Caco-2 (cell line): ENCODE measurements at regions of chr6 and their contacts with region 1.

Region 1: DNA sequence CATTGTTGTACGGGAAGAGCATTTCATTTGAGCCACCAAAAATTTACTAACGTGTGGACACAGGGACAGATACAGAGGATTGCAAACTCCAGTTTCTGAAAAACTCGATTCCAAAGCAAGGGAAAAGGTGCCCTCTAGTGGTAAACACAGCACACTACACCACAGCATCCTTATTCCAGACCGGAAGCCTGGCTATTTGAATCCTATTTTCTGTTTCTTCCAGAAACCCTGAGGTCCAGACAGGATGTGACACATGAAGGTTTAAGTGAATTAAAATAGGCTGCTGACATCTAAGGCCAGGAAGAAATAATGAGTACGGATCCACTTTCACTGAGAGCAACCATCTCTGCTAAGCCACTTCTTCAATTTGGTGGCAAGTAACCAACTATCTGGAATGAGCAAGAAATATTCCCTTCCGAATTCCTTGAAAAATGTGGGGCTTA is 31.8 kb upstream of the GMPR start:
- DNase-seq: peak; percentile 56 to 72
- H3K4me3 ChIP-seq: no peak overlapping the region
- H3K4me3 Mint-ChIP-seq: no peak overlapping the region
- H3K27ac Mint-ChIP-seq: peak overlapping the region; percentile 39
- H3K4me1 ChIP-seq: peaks cover 21% of the 10 kb centered on the region
- H3K4me1 Mint-ChIP-seq: peaks cover 16% of the 10 kb centered on the region
- H3K27me3 ChIP-seq: no peaks in the 10 kb centered on the region
- H3K27me3 Mint-ChIP-seq: peaks cover 6% of the 10 kb centered on the region
- CTCF ChIP-seq: peak; percentile 82 to 93

Region 2: GRCh38 chr6:15691250-15691869 is 515.3 kb before region 1 on chr6:
- CTCF ChIA-PET with region 1: interaction called, 20 read pairs
- POLR2A ChIA-PET with region 1: no interaction called
- intact Hi-C with region 1: loop called (anchors 1 kb)
- DNase-seq: peak; percentile 81
- H3K4me3 ChIP-seq: no peak overlapping the region
- H3K4me3 Mint-ChIP-seq: peak overlapping the region; percentile 12
- H3K27ac Mint-ChIP-seq: no peak overlapping the region
- H3K4me1 ChIP-seq: 0 out of 2 replicates have a peak, but pooled peaks cover 5% of the 10 kb centered on the region
- H3K4me1 Mint-ChIP-seq: no peaks in the 10 kb centered on the region
- H3K27me3 ChIP-seq: no peaks in the 10 kb centered on the region
- H3K27me3 Mint-ChIP-seq: no peaks in the 10 kb centered on the region
- CTCF ChIP-seq: peak; percentile 99

Region 3: DNA sequence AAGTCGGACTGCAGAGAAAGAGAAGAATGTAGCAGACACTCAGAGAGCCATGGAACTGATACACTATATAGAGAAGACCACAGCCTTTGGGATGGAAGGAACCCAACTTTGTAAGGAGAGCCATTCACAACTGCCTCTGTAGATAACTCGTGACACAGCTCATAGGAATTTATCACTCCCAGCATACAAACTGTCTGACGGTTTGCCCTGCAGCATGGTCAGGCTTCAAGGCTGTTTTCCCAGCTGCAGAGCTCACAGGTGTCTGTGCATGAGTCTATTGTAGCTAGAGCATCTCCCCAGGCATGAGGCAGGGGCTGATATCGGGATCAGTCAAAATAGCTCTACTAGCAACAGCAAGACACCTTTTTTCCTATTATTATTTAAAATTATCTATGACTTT is 413.3 kb before region 1 on chr6:
- CTCF ChIA-PET with region 1: no interaction called
- POLR2A ChIA-PET with region 1: no interaction called
- intact Hi-C with region 1: loop called (anchors 1 kb)
- DNase-seq: peak; percentile 52 to 63
- H3K4me3 ChIP-seq: no peak overlapping the region
- H3K4me3 Mint-ChIP-seq: no peak overlapping the region
- H3K27ac Mint-ChIP-seq: peak overlapping the region; percentile 79
- H3K4me1 ChIP-seq: peaks cover 33% of the 10 kb centered on the region
- H3K4me1 Mint-ChIP-seq: peaks cover 26% of the 10 kb centered on the region
- H3K27me3 ChIP-seq: no peaks in the 10 kb centered on the region
- H3K27me3 Mint-ChIP-seq: no peaks in the 10 kb centered on the region
- CTCF ChIP-seq: no peak

Region 4: DNA sequence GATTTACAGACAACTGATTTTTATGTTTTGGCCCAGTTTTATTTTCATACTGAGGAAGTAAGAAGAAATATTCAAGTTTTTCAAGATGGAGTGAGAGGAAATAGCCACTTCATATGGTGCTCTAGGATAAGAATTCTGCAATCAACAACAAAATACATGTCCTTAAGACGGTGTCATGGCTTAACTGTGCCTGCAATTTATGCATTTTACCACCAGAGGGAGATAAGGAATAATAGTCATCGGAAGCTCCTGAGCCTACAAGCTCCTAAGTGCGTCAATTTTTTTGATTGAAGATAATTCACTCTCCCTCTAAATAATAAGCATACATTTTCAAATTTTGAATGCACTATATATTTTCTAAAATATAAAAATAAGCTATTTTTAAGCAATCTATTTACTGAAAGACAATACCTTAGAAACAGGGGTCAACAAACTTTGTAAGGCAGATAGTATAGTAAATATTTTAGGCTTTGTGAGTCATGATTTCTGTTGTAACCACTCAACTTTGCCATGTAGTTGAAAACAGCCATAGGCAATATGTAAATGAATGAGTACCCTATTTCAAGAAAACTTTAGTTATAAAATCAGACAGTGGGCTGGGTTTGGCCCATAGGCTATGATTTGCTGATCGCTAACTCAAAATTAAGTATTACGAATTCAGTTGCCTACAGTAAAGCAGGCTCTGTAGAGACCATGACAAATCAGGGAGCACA is 312.9 kb before region 1 on chr6:
- CTCF ChIA-PET with region 1: interaction called, 4 read pairs
- POLR2A ChIA-PET with region 1: no interaction called
- intact Hi-C with region 1: loop called (anchors 1 kb)
- DNase-seq: peak in 1 of 2 experiments; percentile 24
- H3K4me3 ChIP-seq: no peak overlapping the region
- H3K4me3 Mint-ChIP-seq: no peak overlapping the region
- H3K27ac Mint-ChIP-seq: no peak overlapping the region
- H3K4me1 ChIP-seq: 0 out of 2 replicates have a peak, but pooled peaks cover 18% of the 10 kb centered on the region
- H3K4me1 Mint-ChIP-seq: no peaks in the 10 kb centered on the region
- H3K27me3 ChIP-seq: no peaks in the 10 kb centered on the region
- H3K27me3 Mint-ChIP-seq: no peaks in the 10 kb centered on the region
- CTCF ChIP-seq: peak; percentile 37 to 41

Region 5: GRCh38 chr6:16168858-16169257 is 37.8 kb before region 1 on chr6:
- CTCF ChIA-PET with region 1: interaction called, 3 read pairs
- POLR2A ChIA-PET with region 1: no interaction called
- intact Hi-C with region 1: loop called (anchors 1 kb)
- DNase-seq: peak in 1 of 2 experiments; percentile 37
- H3K4me3 ChIP-seq: no peak overlapping the region
- H3K4me3 Mint-ChIP-seq: peak overlapping the region; percentile 65
- H3K27ac Mint-ChIP-seq: peak overlapping the region; percentile 88
- H3K4me1 ChIP-seq: peaks cover 74% of the 10 kb centered on the region
- H3K4me1 Mint-ChIP-seq: peaks cover 67% of the 10 kb centered on the region
- H3K27me3 ChIP-seq: no peaks in the 10 kb centered on the region
- H3K27me3 Mint-ChIP-seq: no peaks in the 10 kb centered on the region
- CTCF ChIP-seq: peak; percentile 27 to 57